Caco-2 (cell line): ENCODE measurements at regions of chr3 and their contacts with region 1.

Region 1: DNA sequence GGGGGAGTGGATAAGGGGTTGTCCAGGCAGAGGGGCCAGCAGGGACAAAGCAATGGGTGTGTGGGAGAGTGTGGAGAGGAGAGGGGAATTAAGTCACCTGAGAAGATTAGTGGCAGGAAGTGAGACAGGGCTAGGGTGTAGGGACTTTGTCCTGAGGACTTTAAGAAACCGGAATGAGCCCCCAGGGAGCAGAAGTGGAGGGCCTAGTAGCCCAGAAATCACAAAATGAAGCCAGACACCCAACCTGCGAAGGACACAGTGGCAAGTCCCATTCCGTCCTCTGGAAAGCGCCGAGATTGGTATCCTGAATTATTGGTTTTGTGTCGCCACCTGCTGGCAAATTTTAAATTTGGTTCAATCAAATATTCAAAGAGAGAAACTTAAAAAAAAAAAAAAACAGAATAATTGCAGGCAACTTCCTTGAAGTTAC is 78.0 kb upstream of the SLC25A36 start:
- DNase-seq: peak; percentile 46 to 73
- H3K4me3 ChIP-seq: no peak overlapping the region
- H3K4me3 Mint-ChIP-seq: no peak overlapping the region
- H3K27ac Mint-ChIP-seq: no peak overlapping the region
- H3K4me1 ChIP-seq: no peaks in the 10 kb centered on the region
- H3K4me1 Mint-ChIP-seq: peaks cover 8% of the 10 kb centered on the region
- H3K27me3 ChIP-seq: no peaks in the 10 kb centered on the region
- H3K27me3 Mint-ChIP-seq: peaks cover 8% of the 10 kb centered on the region
- CTCF ChIP-seq: peak; percentile 33 to 50

Region 2: DNA sequence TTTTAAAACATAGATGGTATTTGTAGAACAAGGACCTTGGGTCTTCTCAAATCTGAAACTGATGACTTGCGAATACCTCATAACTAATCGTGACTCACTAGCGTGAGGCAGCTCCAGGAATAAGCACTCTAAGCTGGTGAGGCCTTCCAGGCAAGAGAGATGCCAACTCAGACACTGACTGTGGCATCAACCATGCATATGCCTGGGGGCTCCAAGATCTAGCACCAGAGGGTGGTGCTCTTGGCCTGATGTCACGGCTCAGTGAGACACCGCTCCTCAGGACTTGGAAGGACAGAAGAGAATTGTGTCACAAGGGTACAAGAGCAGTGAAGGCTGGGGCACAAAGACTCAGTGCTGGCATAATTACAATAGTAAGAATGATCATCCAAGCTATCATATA is 310.7 kb before region 1 on chr3:
- CTCF ChIA-PET with region 1: no interaction called
- POLR2A ChIA-PET with region 1: no interaction called
- intact Hi-C with region 1: loop called (anchors 1 kb)
- DNase-seq: no peak
- H3K4me3 ChIP-seq: no peak overlapping the region
- H3K4me3 Mint-ChIP-seq: no peak overlapping the region
- H3K27ac Mint-ChIP-seq: no peak overlapping the region
- H3K4me1 ChIP-seq: no peaks in the 10 kb centered on the region; the same call in 1 of the 2 replicates
- H3K4me1 Mint-ChIP-seq: no peaks in the 10 kb centered on the region
- H3K27me3 ChIP-seq: no peaks in the 10 kb centered on the region
- H3K27me3 Mint-ChIP-seq: no peaks in the 10 kb centered on the region
- CTCF ChIP-seq: no peak

Region 3: DNA sequence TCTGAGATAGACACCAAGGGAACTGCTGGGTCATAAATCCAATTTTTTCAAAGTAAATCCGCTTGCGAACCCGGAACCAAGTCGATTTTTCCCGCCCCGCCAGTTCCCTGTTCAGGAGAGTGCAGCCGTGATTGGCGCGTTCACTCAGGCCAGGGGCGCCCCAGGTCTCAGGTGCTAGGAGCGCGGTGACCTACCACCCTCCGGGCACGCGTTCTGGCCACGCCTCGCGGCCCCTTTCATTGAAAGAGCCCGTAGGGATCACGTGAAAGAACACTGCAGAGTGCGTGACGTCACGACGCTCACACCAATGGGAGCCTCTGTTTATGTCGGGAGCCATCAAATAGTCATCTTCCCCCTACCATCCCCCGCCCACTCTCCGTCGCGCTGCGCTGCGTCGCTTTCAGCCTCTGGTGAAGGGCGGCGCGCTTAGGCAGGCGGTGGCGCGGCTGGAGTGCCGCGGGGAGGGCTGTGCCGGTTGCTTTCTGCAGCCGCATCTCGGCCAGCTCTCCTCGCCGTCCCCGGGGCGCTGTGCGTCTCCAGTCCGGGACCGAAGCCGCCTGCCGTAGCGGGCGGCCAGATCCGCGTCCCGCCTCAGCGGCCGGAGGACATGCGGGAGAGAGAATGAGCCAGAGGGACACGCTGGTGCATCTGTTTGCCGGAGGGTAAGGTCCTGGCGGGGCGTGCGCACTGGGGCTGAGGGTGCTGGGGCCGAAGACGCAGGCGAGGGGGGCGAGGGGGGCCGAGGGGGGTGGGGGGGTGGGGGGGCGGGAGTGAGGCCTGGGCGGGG is 78.0 kb after region 1 on chr3 and contains the start of gene SLC25A36:
- CTCF ChIA-PET with region 1: no interaction called
- POLR2A ChIA-PET with region 1: no interaction called
- intact Hi-C with region 1: no loop called
- DNase-seq: peak; percentile 98
- H3K4me3 ChIP-seq: peak within 1 kb of the TSS; percentile 94
- H3K4me3 Mint-ChIP-seq: peak within 1 kb of the TSS; percentile 89
- H3K27ac Mint-ChIP-seq: peak within 1 kb of the TSS; percentile 97
- H3K4me1 ChIP-seq: peaks cover 30% of the 10 kb centered on the region
- H3K4me1 Mint-ChIP-seq: peaks cover 9% of the 10 kb centered on the region
- H3K27me3 ChIP-seq: no peaks in the 10 kb centered on the region
- H3K27me3 Mint-ChIP-seq: no peaks in the 10 kb centered on the region
- CTCF ChIP-seq: no peak
- total RNA-seq, gene SLC25A36: 150 and 167 TPM in 2 replicates